ENCODE measurements at regions of chr7 and their contacts with region 1.

Region 1: GRCh38 chr7:55365675-55366460 is 731 bp downstream of the LANCL2 start:
- DNase-seq: peak; percentile 99
- ATAC-seq: peak; percentile 86
- H3K4me3 Mint-ChIP-seq: peak overlapping the region; percentile 94
- H3K27ac Mint-ChIP-seq: peak overlapping the region; percentile 96
- H3K4me1 Mint-ChIP-seq: peaks cover 24% of the 10 kb centered on the region
- H3K27me3 Mint-ChIP-seq: no peaks in the 10 kb centered on the region
- CTCF ChIP-seq: no peak

Region 2: GRCh38 chr7:55073945-55074499 is 291.8 kb before region 1 on chr7:
- CTCF ChIA-PET with region 1: no interaction called
- POLR2A ChIA-PET with region 1: no interaction called
- intact Hi-C with region 1: loop called (anchors 5 kb)
- DNase-seq: peak; percentile 27
- ATAC-seq: peak; percentile 86
- H3K4me3 Mint-ChIP-seq: peak overlapping the region; percentile 70
- H3K27ac Mint-ChIP-seq: peak overlapping the region; percentile 73
- H3K4me1 Mint-ChIP-seq: peaks cover 23% of the 10 kb centered on the region
- H3K27me3 Mint-ChIP-seq: peaks cover 5% of the 10 kb centered on the region
- CTCF ChIP-seq: no peak

Region 3: GRCh38 chr7:55325371-55325792 is 40.5 kb before region 1 on chr7:
- CTCF ChIA-PET with region 1: no interaction called
- POLR2A ChIA-PET with region 1: no interaction called
- intact Hi-C with region 1: no loop called
- DNase-seq: no peak
- ATAC-seq: no peak
- H3K4me3 Mint-ChIP-seq: no peak overlapping the region
- H3K27ac Mint-ChIP-seq: no peak overlapping the region
- H3K4me1 Mint-ChIP-seq: no peaks in the 10 kb centered on the region
- H3K27me3 Mint-ChIP-seq: peaks cover 3% of the 10 kb centered on the region
- CTCF ChIP-seq: no peak

Region 4: DNA sequence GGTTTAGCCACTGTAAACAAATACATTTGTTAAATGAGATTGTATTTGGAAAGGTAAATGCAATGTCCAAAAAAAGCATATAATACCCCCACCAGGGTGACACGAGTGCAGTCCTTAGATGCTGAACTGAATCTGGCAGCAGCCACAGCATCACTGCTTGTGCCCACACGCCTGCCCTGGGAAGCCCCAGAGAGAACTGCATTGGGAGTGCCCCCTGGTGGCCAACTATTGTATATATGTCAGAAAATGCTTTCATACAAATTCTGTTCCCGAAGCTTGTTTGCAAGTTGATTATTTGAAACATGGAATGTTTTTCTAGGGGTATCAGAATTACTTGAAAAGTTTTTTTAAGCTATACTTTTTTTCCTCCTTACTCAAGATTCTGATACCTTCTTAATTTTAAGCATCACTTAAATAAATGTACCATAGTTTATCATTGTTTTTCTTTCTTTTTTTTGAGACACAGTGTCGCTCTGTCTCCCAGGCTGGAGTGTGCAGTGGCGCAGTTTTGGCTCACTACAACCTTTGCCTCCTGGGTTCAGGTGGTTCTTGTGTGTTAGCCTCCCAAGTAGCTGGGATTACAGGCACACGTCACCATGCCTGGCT is 49.4 kb after region 1 on chr7:
- CTCF ChIA-PET with region 1: interaction called, 4 read pairs
- POLR2A ChIA-PET with region 1: interaction called, 12 read pairs
- intact Hi-C with region 1: loop called (anchors 1 kb)
- DNase-seq: peak; percentile 55
- ATAC-seq: peak; percentile 99
- H3K4me3 Mint-ChIP-seq: no peak overlapping the region
- H3K27ac Mint-ChIP-seq: no peak overlapping the region
- H3K4me1 Mint-ChIP-seq: peaks cover 2% of the 10 kb centered on the region
- H3K27me3 Mint-ChIP-seq: no peaks in the 10 kb centered on the region
- CTCF ChIP-seq: no peak

Region 5: GRCh38 chr7:55572378-55573233 is 206.7 kb after region 1 on chr7 and contains the start of gene VOPP1:
- CTCF ChIA-PET with region 1: no interaction called
- POLR2A ChIA-PET with region 1: interaction called, 3 read pairs
- intact Hi-C with region 1: loop called (anchors 1 kb)
- DNase-seq: peak; percentile 79
- ATAC-seq: peak; percentile 63
- H3K4me3 Mint-ChIP-seq: peak within 1 kb of the TSS; percentile 97
- H3K27ac Mint-ChIP-seq: peak within 1 kb of the TSS; percentile 93
- H3K4me1 Mint-ChIP-seq: peaks cover 49% of the 10 kb centered on the region
- H3K27me3 Mint-ChIP-seq: no peaks in the 10 kb centered on the region
- CTCF ChIP-seq: no peak
- total RNA-seq, gene VOPP1: 403 and 438 TPM in 2 replicates

Region 6: DNA sequence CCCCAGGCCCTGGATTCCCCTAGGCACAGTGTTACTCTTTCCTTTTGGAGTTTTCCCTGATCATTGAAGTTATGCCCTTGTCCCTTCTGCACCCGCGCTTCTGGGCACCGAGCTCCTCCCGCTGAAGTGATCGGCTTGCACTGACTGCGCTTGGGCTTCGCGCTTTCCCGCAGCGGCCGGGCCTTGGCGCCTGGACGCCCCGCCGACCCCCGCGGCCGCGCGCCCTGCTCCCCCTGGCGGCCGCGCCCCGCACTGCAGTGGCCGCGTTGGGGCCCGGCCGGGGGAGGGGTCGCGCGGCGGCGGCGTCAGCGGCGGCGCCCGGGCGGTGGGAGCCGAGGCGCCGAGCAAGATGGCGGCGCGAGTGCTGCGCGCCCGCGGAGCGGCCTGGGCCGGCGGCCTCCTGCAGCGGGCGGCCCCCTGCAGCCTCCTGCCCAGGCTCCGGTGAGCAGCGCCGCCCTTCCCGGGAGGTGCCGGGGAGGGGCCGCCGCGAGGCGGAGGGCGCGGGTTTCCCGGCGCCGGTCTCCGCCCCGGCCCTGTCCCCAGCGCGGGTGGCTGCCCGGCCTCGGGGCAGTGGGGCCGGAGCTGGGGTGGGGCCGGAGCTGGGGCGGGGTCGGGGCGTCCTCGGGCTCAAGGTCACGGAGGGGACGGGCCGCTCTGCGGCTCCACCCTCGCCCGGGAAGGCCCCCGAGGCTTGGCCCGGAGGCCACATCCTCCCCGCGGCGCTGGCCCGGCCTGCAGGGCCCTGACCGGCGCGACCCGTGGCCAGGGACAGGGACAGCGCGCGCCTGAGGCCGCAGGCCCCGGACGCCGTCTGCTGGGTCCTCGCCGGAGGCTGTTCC is 598.6 kb after region 1 on chr7 and contains the start of gene NIPSNAP2:
- CTCF ChIA-PET with region 1: no interaction called
- POLR2A ChIA-PET with region 1: interaction called, 5 read pairs
- intact Hi-C with region 1: loop called (anchors 2 kb)
- DNase-seq: peak; percentile 79
- ATAC-seq: peak; percentile 88
- H3K4me3 Mint-ChIP-seq: peak within 1 kb of the TSS; percentile 86
- H3K27ac Mint-ChIP-seq: peak within 1 kb of the TSS; percentile 88
- H3K4me1 Mint-ChIP-seq: peaks cover 25% of the 10 kb centered on the region
- H3K27me3 Mint-ChIP-seq: no peaks in the 10 kb centered on the region
- CTCF ChIP-seq: no peak
- total RNA-seq, gene NIPSNAP2: 33.7 and 43.8 TPM in 2 replicates

Region 7: DNA sequence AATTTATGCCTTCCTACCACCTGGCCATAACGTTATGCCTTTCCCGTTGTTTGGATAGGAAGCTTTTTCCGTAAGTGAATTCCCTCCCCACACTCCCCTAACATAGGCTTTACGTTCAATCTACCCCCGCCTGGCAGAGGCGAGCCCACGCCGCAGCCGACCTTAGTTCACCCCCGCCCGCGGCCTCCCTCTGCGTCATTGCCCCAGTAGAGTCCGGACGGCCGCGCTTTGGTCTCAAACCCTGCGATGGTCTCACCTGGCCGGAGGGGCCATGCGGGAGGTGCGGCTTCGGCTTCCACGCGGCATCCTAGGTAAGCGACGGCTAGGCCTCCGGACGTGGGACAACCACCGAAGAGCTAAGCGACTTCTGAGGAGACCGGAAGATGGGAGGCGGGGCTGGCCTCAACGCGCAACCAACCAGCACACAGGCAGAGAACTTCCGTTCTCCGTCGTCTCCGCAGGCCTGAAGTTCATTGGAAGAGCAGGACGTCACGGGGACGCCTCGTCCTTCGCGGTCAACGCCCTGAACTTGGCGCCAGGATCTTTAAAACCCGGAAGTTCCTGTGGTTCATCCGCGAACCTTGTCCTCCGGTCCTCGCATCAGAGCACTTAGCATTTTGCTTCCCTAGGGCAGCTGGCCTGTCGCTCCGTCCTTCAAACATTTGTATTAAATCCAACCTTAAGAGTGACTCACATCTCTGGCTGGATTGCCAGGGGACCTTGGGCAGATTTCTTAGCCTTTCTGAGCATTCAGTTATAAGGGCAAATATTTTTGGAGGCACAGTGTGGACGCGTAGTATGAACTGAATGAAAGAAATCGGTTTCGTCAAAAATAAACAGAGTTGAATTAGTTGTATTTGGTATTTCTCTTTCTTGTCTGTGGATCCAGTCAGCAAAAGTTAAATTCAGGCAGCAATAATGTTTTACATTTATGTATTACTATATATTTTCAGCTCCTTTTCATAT is 740.5 kb after region 1 on chr7 and contains the start of gene CHCHD2:
- CTCF ChIA-PET with region 1: no interaction called
- POLR2A ChIA-PET with region 1: interaction called, 12 read pairs
- intact Hi-C with region 1: loop called (anchors 1 kb)
- DNase-seq: peak; percentile 81
- ATAC-seq: peak; percentile 99
- H3K4me3 Mint-ChIP-seq: peak within 1 kb of the TSS; percentile 98
- H3K27ac Mint-ChIP-seq: peak within 1 kb of the TSS; percentile 98
- H3K4me1 Mint-ChIP-seq: peaks cover 37% of the 10 kb centered on the region
- H3K27me3 Mint-ChIP-seq: peaks cover 2% of the 10 kb centered on the region
- CTCF ChIP-seq: no peak
- total RNA-seq, gene CHCHD2: 309 and 350 TPM in 2 replicates

Measured in activated B cell treated with CpG ODN at 0.5 μM for 24 hours (primary cell).